ENCODE measurements at regions of chr22 and their contacts with region 1.

Region 1: GRCh38 chr22:42994881-42995562 is 19.9 kb downstream of the PACSIN2 start:
- DNase-seq: peak; percentile 79 to 81
- H3K4me3 ChIP-seq: peak overlapping the region; percentile 28
- H3K4me3 Mint-ChIP-seq: peak overlapping the region; percentile 82
- H3K27ac Mint-ChIP-seq: peak overlapping the region; percentile 99
- H3K4me1 ChIP-seq: peaks cover 71% of the 10 kb centered on the region
- H3K4me1 Mint-ChIP-seq: peaks cover 55% of the 10 kb centered on the region
- H3K27me3 ChIP-seq: no peaks in the 10 kb centered on the region
- H3K27me3 Mint-ChIP-seq: no peaks in the 10 kb centered on the region
- CTCF ChIP-seq: no peak

Region 2: DNA sequence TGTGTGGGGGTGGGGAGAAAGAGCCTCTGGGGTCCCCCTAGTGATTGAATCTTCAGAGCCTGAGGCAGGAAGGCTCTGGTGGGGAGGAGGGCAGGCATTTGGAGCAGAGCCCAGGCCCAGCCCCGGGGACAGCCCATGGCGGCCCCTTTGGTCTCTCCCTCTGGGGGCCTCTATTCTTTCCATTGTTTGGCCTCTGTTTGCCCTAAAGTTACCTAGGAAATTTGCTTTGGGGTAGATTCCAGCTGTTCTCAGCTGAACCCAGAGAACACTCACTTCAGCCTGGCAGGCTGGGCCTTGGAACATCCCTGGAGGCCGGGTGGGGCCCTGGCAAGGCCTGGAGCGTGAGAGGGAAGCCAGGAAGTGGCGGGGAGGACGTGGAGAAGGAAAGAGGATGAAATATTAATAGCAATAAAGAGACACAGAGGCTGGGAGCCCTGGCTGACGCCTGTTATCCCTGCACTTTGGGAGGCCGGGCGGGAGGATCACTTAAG is 251.5 kb before region 1 on chr22:
- CTCF ChIA-PET with region 1: no interaction called
- POLR2A ChIA-PET with region 1: no interaction called
- intact Hi-C with region 1: no loop called
- DNase-seq: no peak
- H3K4me3 ChIP-seq: no peak overlapping the region
- H3K4me3 Mint-ChIP-seq: no peak overlapping the region
- H3K27ac Mint-ChIP-seq: peak overlapping the region; percentile 55
- H3K4me1 ChIP-seq: peaks cover 64% of the 10 kb centered on the region
- H3K4me1 Mint-ChIP-seq: peaks cover 35% of the 10 kb centered on the region
- H3K27me3 ChIP-seq: no peaks in the 10 kb centered on the region
- H3K27me3 Mint-ChIP-seq: no peaks in the 10 kb centered on the region
- CTCF ChIP-seq: no peak

Region 3: GRCh38 chr22:42933481-42934091 is 61.4 kb before region 1 on chr22:
- CTCF ChIA-PET with region 1: no interaction called
- POLR2A ChIA-PET with region 1: no interaction called
- intact Hi-C with region 1: no loop called
- DNase-seq: no peak
- H3K4me3 ChIP-seq: no peak overlapping the region
- H3K4me3 Mint-ChIP-seq: no peak overlapping the region
- H3K27ac Mint-ChIP-seq: peak overlapping the region; percentile 66
- H3K4me1 ChIP-seq: peaks cover 30% of the 10 kb centered on the region
- H3K4me1 Mint-ChIP-seq: peaks cover 51% of the 10 kb centered on the region
- H3K27me3 ChIP-seq: no peaks in the 10 kb centered on the region
- H3K27me3 Mint-ChIP-seq: no peaks in the 10 kb centered on the region
- CTCF ChIP-seq: no peak

Region 4: DNA sequence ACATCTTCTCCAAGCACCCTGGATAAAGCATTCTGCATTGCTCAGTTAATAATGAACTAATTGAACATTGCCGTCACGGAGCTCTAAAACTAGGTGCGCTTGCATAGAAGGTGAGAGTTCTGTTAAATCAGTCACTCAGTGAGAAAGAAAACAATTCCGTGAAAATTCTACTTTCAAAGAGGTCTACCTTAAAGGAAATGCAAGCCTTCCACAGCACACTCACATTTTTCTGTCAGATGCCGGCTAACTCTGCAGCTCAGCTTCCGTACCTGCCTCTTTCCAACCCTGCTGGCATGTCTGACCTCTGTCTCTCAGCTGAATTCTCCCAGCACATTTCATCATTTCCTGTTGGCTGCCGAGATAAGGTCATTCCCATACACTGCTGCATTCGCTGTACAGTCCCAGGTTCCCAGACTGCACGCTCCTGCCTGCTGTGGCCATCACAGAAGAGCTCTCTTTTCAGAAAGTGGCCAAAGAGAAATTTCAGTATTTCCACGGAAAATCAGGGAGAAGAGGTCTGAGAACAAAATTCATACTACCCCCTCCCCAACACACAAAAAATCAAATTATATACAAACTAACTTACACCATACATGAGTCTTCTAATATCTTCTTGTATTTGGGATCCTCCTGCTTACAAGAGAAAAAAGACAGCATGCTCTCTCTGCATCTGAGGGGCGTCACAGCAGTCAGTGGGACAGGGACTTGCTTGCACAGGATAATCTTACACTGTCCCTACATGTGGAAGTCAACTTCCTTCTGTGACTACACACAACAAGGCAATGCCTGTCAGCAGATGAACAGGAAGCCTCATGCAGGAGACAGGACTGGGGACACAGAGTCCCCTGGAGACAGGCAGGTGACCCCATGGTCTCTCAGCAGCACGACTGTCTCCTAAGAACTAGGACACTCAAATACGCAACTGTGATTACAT is 35.2 kb before region 1 on chr22:
- CTCF ChIA-PET with region 1: no interaction called
- POLR2A ChIA-PET with region 1: interaction called, 14 read pairs
- intact Hi-C with region 1: no loop called
- DNase-seq: peak; percentile 80 to 81
- H3K4me3 ChIP-seq: 0 out of 2 replicates have a peak overlapping the region, but pooled peaks have one; percentile 4
- H3K4me3 Mint-ChIP-seq: peak overlapping the region; percentile 78
- H3K27ac Mint-ChIP-seq: peak overlapping the region; percentile 90
- H3K4me1 ChIP-seq: peaks cover 44% of the 10 kb centered on the region
- H3K4me1 Mint-ChIP-seq: peaks cover 52% of the 10 kb centered on the region
- H3K27me3 ChIP-seq: no peaks in the 10 kb centered on the region
- H3K27me3 Mint-ChIP-seq: no peaks in the 10 kb centered on the region
- CTCF ChIP-seq: no peak

Region 5: GRCh38 chr22:42984814-42985552 is 10.0 kb before region 1 on chr22:
- CTCF ChIA-PET with region 1: no interaction called
- POLR2A ChIA-PET with region 1: no interaction called
- intact Hi-C with region 1: no loop called
- DNase-seq: no peak
- H3K4me3 ChIP-seq: no peak overlapping the region
- H3K4me3 Mint-ChIP-seq: no peak overlapping the region
- H3K27ac Mint-ChIP-seq: peak overlapping the region; percentile 16
- H3K4me1 ChIP-seq: peaks cover 14% of the 10 kb centered on the region
- H3K4me1 Mint-ChIP-seq: peaks cover 18% of the 10 kb centered on the region
- H3K27me3 ChIP-seq: no peaks in the 10 kb centered on the region
- H3K27me3 Mint-ChIP-seq: no peaks in the 10 kb centered on the region
- CTCF ChIP-seq: no peak

Region 6: GRCh38 chr22:43007519-43008102 is 12.6 kb after region 1 on chr22:
- CTCF ChIA-PET with region 1: interaction called, 11 read pairs
- POLR2A ChIA-PET with region 1: interaction called, 38 read pairs
- intact Hi-C with region 1: loop called (anchors 1 kb)
- DNase-seq: peak; percentile 72 to 80
- H3K4me3 ChIP-seq: no peak overlapping the region
- H3K4me3 Mint-ChIP-seq: peak overlapping the region; percentile 54
- H3K27ac Mint-ChIP-seq: peak overlapping the region; percentile 91
- H3K4me1 ChIP-seq: peaks cover 82% of the 10 kb centered on the region
- H3K4me1 Mint-ChIP-seq: peaks cover 30% of the 10 kb centered on the region
- H3K27me3 ChIP-seq: no peaks in the 10 kb centered on the region
- H3K27me3 Mint-ChIP-seq: no peaks in the 10 kb centered on the region
- CTCF ChIP-seq: no peak

Region 7: DNA sequence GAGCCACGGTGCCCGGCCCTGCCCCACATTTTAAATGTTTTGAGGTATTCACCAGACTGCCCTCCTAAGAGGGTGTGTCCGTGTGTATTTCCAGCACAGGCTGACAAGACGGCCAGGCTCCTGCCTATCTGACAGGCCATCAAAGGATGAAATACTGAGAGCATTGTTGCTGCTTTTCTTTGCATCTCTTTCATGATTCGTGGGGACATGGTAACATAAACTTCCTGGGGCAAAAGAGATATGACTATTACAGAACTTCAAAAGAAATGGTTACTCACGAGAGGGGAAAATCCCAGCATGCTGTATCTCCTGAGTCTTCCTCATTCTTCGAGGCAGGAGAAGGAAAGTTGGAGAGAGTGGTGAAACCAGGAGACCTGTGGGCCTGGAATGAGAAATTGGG is 105.2 kb after region 1 on chr22:
- CTCF ChIA-PET with region 1: no interaction called
- POLR2A ChIA-PET with region 1: no interaction called
- intact Hi-C with region 1: loop called (anchors 1 kb)
- DNase-seq: peak; percentile 56 to 73
- H3K4me3 ChIP-seq: no peak overlapping the region
- H3K4me3 Mint-ChIP-seq: no peak overlapping the region
- H3K27ac Mint-ChIP-seq: peak overlapping the region; percentile 67
- H3K4me1 ChIP-seq: peaks cover 49% of the 10 kb centered on the region
- H3K4me1 Mint-ChIP-seq: peaks cover 21% of the 10 kb centered on the region
- H3K27me3 ChIP-seq: no peaks in the 10 kb centered on the region
- H3K27me3 Mint-ChIP-seq: no peaks in the 10 kb centered on the region
- CTCF ChIP-seq: no peak

Region 8: GRCh38 chr22:43110444-43110926 is 115.5 kb after region 1 on chr22 and contains the start of gene BIK:
- CTCF ChIA-PET with region 1: no interaction called
- POLR2A ChIA-PET with region 1: no interaction called
- intact Hi-C with region 1: no loop called
- DNase-seq: peak; percentile 62 to 64
- H3K4me3 ChIP-seq: peak within 1 kb of the TSS; percentile 87
- H3K4me3 Mint-ChIP-seq: peak within 1 kb of the TSS; percentile 76
- H3K27ac Mint-ChIP-seq: no peak within 1 kb of the TSS
- H3K4me1 ChIP-seq: peaks cover 4% of the 10 kb centered on the region
- H3K4me1 Mint-ChIP-seq: peaks cover 7% of the 10 kb centered on the region
- H3K27me3 ChIP-seq: no peaks in the 10 kb centered on the region
- H3K27me3 Mint-ChIP-seq: no peaks in the 10 kb centered on the region
- CTCF ChIP-seq: peak in 1 of 2 experiments; percentile 34
- total RNA-seq, gene BIK: 13.3 and 17.6 TPM in 2 replicates

Measured in Caco-2 (cell line).